ENCODE measurements at regions of chr7 and their contacts with region 1.

Region 1: DNA sequence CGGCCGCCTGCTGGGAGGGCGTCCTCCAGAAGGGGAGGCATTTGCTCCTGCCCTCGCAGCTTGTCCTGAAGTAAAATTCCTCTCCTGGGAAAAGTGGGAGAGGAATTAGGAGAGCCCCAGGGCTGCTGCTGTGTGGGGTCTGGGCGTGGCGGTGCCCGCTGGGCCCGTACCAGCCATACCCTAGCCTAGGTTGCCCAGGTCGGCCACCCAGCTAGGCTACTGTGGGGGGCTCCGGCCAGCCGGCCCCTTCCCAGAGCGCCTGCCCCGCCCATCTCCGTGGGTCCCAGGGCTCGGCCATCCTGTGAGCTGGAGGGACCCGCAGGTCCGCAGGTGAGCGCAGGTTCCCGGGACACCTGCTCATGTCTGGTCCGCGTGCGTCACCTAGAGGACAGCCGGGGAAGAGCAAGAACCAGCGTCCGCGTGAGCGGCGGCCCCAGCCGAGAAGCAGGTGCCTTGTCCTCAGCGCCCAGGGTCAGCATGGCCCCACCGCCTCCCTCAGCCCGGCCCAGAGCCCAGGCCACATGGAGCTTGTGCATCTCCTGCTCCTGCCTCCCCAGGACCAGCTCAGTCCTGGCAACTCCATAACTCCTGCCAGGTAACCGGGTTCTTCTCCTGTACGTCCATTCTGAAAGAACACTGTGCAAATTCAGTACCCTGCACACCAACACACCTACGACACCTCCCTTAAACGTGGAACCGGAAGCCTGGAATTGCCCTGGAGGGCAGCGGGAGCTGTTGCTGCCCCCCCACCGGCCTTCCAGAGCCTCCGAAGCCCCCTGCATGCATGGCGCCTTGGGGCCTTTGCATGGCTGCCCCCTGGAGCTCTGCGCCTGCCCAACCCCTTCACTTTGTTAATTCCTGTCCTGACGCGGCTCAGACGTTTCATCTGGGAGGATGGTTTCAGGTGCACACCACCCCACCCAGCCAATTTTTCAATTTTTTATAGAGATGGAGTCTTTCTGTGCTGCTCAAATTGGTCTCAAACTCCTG is 22.8 kb upstream of the FOXL3 start:
- DNase-seq: peak; percentile 82
- H3K4me3 ChIP-seq: no peak overlapping the region
- H3K27ac ChIP-seq: no peak overlapping the region
- H3K4me1 ChIP-seq: no peaks in the 10 kb centered on the region
- H3K27me3 ChIP-seq: peaks cover 25% of the 10 kb centered on the region; the same call in 1 of the 2 replicates
- CTCF ChIP-seq: peak; percentile 65
- EP300 ChIP-seq: no peak
- RAD21 ChIP-seq: peak; percentile 74

Region 2: GRCh38 chr7:57482-58255 is 209.5 kb before region 1 on chr7:
- CTCF ChIA-PET with region 1: interaction called, 42 read pairs
- POLR2A ChIA-PET with region 1: no interaction called
- DNase-seq: peak; percentile 64
- H3K4me3 ChIP-seq: no peak overlapping the region
- H3K27ac ChIP-seq: peak overlapping the region in 1 of 2 experiments; percentile 47; a peak in 2 of 4 replicates
- H3K4me1 ChIP-seq: peaks cover 0 to 26% of the 10 kb centered on the region in 2 experiments; a peak in 1 of 4 replicates
- H3K27me3 ChIP-seq: no peaks in the 10 kb centered on the region; the same call in 1 of the 2 replicates
- CTCF ChIP-seq: no peak
- EP300 ChIP-seq: no peak
- RAD21 ChIP-seq: no peak

Region 3: GRCh38 chr7:64098-64915 is 202.8 kb before region 1 on chr7:
- CTCF ChIA-PET with region 1: interaction called, 42 read pairs
- POLR2A ChIA-PET with region 1: no interaction called
- DNase-seq: peak; percentile 78
- H3K4me3 ChIP-seq: no peak overlapping the region
- H3K27ac ChIP-seq: no peak overlapping the region
- H3K4me1 ChIP-seq: peaks cover 2 to 9% of the 10 kb centered on the region in 2 experiments; a peak in 1 of 4 replicates
- H3K27me3 ChIP-seq: no peaks in the 10 kb centered on the region
- CTCF ChIP-seq: peak; percentile 72
- EP300 ChIP-seq: no peak
- RAD21 ChIP-seq: peak; percentile 81

Region 4: DNA sequence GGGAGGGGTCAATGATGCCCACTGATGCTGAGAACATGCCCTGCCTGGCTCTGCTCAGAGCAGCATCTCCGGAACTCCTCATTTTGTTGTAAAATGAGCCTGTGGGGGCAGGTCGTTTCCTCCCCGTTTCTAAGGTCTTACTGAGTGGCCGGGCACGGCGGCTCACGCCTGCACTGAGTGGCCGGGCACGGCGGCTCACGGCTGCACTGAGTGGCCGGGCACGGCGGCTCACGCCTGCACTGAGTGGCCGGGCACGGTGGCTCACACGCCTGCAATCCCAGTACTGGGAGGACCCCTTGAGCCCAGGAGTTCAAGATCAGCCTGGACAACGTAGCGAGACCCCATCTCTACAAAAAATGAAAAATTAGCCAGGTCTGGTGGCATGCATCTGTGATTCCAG is 16.1 kb before region 1 on chr7:
- CTCF ChIA-PET with region 1: interaction called, 13 read pairs
- POLR2A ChIA-PET with region 1: no interaction called
- DNase-seq: no peak
- H3K4me3 ChIP-seq: no peak overlapping the region
- H3K27ac ChIP-seq: no peak overlapping the region
- H3K4me1 ChIP-seq: peaks cover 0 to 10% of the 10 kb centered on the region in 2 experiments; a peak in 2 of 4 replicates
- H3K27me3 ChIP-seq: no peaks in the 10 kb centered on the region
- CTCF ChIP-seq: no peak
- EP300 ChIP-seq: no peak
- RAD21 ChIP-seq: no peak

Region 5: DNA sequence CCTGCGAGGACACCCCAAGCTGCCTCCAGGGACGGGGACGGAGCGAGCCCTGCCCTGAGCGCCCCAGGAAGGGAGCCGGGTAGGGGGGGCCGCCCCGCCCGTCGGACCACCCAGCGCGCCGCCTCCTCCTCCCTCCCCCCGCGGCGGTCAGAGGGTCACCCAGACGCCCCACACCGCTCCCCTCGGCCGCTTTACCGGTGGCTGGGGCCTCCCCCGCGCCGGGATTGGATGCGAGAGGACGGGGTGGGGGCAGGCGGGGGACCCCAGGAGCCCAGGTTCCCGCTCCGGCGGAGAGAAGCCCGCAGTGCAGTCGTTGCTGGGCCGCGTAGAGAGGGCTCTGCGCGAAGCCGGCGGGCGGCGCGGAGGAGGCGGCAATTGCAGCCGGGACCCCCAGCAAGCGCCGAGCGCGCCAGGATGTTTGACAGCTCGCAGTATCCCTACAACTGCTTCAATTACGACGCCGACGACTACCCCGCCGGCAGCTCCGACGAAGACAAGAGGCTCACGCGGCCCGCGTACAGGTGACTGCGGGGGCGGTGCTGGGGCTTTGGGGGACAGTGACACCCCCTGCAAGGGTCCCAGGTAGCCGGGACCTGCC is 22.7 kb after region 1 on chr7 and contains the start of gene FOXL3:
- CTCF ChIA-PET with region 1: interaction called, 10 read pairs
- POLR2A ChIA-PET with region 1: no interaction called
- DNase-seq: peak; percentile 52
- H3K4me3 ChIP-seq: no peak within 1 kb of the TSS
- H3K27ac ChIP-seq: no peak within 1 kb of the TSS
- H3K4me1 ChIP-seq: no peaks in the 10 kb centered on the region
- H3K27me3 ChIP-seq: peaks cover 98% of the 10 kb centered on the region
- CTCF ChIP-seq: no peak
- EP300 ChIP-seq: no peak
- RAD21 ChIP-seq: no peak
- polyA plus RNA-seq, gene FOXL3: not detected in 2 replicates

Region 6: DNA sequence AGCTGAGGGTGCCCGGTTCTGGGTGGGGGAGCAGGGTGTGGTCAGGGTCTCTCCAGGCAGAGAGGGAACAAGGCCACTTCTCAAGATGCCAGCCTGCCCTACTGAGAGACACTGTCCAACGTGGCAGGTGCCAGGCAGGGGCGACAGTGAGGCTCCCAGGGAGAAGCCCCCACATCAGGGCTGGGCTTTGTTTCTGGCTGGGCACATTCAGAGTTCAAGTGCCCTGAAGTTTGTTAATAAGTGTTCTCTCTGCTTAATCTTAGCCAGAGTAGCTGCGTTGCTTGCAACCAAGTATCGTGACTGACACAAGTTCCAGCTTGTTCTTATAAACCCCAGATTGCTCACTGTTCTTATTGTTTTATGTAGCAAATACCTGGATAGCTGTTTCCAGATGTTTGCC is 44.6 kb after region 1 on chr7:
- CTCF ChIA-PET with region 1: no interaction called
- POLR2A ChIA-PET with region 1: no interaction called
- DNase-seq: no peak
- H3K4me3 ChIP-seq: no peak overlapping the region
- H3K27ac ChIP-seq: no peak overlapping the region
- H3K4me1 ChIP-seq: no peaks in the 10 kb centered on the region
- H3K27me3 ChIP-seq: peaks cover 70% of the 10 kb centered on the region
- CTCF ChIP-seq: no peak
- EP300 ChIP-seq: no peak
- RAD21 ChIP-seq: no peak

Region 7: GRCh38 chr7:362402-363096 is 95.4 kb after region 1 on chr7:
- CTCF ChIA-PET with region 1: no interaction called
- POLR2A ChIA-PET with region 1: no interaction called
- DNase-seq: no peak
- H3K4me3 ChIP-seq: no peak overlapping the region
- H3K27ac ChIP-seq: no peak overlapping the region
- H3K4me1 ChIP-seq: peaks cover 4 to 5% of the 10 kb centered on the region in 2 experiments; a peak in 2 of 4 replicates
- H3K27me3 ChIP-seq: peaks cover 6% of the 10 kb centered on the region; the same call in 1 of the 2 replicates
- CTCF ChIP-seq: no peak
- EP300 ChIP-seq: no peak
- RAD21 ChIP-seq: no peak

Measured in SK-N-SH (cell line).